MCF 10A (cell line): ENCODE measurements at regions of chr2 and their contacts with region 1.

Region 1: GRCh38 chr2:118046634-118047210 is 32.9 kb upstream of the CCDC93 start:
- DNase-seq: peak; percentile 44
- H3K4me3 Mint-ChIP-seq: no peak overlapping the region
- H3K27ac Mint-ChIP-seq: no peak overlapping the region
- H3K4me1 Mint-ChIP-seq: peaks cover 5% of the 10 kb centered on the region
- H3K27me3 Mint-ChIP-seq: peaks cover 32% of the 10 kb centered on the region
- CTCF ChIP-seq: peak; percentile 54

Region 2: GRCh38 chr2:118032169-118033013 is 14.3 kb before region 1 on chr2:
- CTCF ChIA-PET with region 1: interaction called, 27 read pairs
- POLR2A ChIA-PET with region 1: interaction called, 4 read pairs
- intact Hi-C with region 1: no loop called
- DNase-seq: peak; percentile 60
- H3K4me3 Mint-ChIP-seq: no peak overlapping the region
- H3K27ac Mint-ChIP-seq: no peak overlapping the region
- H3K4me1 Mint-ChIP-seq: no peaks in the 10 kb centered on the region
- H3K27me3 Mint-ChIP-seq: peaks cover 70% of the 10 kb centered on the region
- CTCF ChIP-seq: peak; percentile 46

Region 3: DNA sequence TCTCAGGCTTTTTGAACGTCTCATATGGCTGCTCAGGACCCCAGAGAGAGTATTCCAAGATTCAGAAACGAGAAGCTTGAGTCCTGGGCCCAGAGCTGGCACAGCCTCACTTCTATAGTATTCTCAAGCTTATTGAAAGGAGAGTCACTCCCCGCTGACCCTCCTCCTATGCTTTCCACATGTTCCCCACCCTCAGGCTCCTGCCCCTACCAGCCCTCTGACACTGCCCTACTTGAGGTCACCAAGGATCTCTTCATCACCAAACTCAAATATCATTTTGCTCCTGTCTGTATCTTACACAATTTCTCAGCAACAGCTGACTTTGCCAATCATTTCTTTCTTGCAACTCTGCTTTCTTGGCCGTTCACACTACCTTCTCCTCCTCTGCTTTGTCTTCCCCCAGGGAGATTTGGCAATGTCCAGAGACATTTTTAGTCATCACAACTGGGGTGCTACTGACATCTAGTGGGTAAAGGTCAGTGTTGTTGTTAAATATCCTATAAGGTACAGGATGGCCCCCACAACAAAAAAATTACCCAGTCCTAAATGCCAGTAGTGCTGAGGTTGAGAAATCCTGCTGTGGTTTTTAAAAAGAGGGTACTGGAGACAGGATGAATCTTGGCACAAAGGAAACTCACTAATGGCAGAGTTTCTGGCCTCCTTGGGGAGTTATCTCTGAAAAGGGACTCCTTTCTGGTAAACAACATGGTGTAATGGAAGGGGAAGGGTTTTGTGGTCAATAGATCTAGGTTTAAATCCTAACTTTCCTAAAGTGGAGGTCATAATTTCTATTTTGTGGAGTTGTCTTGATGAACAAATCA is 14.6 kb after region 1 on chr2:
- CTCF ChIA-PET with region 1: interaction called, 164 read pairs
- POLR2A ChIA-PET with region 1: interaction called, 8 read pairs
- intact Hi-C with region 1: loop called (anchors 1 kb)
- DNase-seq: peak; percentile 87
- H3K4me3 Mint-ChIP-seq: no peak overlapping the region
- H3K27ac Mint-ChIP-seq: no peak overlapping the region
- H3K4me1 Mint-ChIP-seq: peaks cover 6% of the 10 kb centered on the region
- H3K27me3 Mint-ChIP-seq: no peaks in the 10 kb centered on the region
- CTCF ChIP-seq: peak; percentile 33

Region 4: DNA sequence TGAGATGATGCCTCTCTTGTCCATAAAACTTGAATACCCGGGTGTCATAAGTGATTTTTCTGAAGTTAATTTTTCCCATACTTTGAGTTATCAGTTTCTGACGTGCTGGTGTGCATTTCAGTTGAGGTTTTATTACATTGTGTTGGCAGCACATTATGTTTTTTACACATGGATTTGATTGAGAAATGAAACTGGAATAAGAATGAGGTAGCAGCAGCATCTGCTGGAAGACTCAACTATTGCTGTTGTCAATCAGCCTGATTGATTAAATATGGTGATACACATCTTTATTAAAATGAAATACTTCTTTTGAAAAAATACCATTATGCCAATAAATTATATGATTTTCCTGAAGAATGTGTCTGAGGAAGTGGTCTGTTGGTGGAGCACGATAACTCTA is 102.1 kb after region 1 on chr2:
- CTCF ChIA-PET with region 1: interaction called, 6 read pairs
- POLR2A ChIA-PET with region 1: interaction called, 3 read pairs
- intact Hi-C with region 1: loop called (anchors 1 kb)
- DNase-seq: peak; percentile 11
- H3K4me3 Mint-ChIP-seq: no peak overlapping the region
- H3K27ac Mint-ChIP-seq: no peak overlapping the region
- H3K4me1 Mint-ChIP-seq: no peaks in the 10 kb centered on the region
- H3K27me3 Mint-ChIP-seq: no peaks in the 10 kb centered on the region
- CTCF ChIP-seq: peak; percentile 11

Region 5: GRCh38 chr2:118202707-118203303 is 156.1 kb after region 1 on chr2:
- CTCF ChIA-PET with region 1: interaction called, 10 read pairs
- POLR2A ChIA-PET with region 1: no interaction called
- intact Hi-C with region 1: loop called (anchors 1 kb)
- DNase-seq: peak; percentile 56
- H3K4me3 Mint-ChIP-seq: no peak overlapping the region
- H3K27ac Mint-ChIP-seq: no peak overlapping the region
- H3K4me1 Mint-ChIP-seq: peaks cover 6% of the 10 kb centered on the region
- H3K27me3 Mint-ChIP-seq: peaks cover 20% of the 10 kb centered on the region
- CTCF ChIP-seq: peak; percentile 75

Region 6: GRCh38 chr2:118221666-118222594 is 175.2 kb after region 1 on chr2:
- CTCF ChIA-PET with region 1: interaction called, 12 read pairs
- POLR2A ChIA-PET with region 1: interaction called, 3 read pairs
- intact Hi-C with region 1: loop called (anchors 5 kb)
- DNase-seq: peak; percentile 72
- H3K4me3 Mint-ChIP-seq: no peak overlapping the region
- H3K27ac Mint-ChIP-seq: no peak overlapping the region
- H3K4me1 Mint-ChIP-seq: peaks cover 12% of the 10 kb centered on the region
- H3K27me3 Mint-ChIP-seq: peaks cover 3% of the 10 kb centered on the region
- CTCF ChIP-seq: peak; percentile 73

Region 7: GRCh38 chr2:118477111-118477862 is 430.6 kb after region 1 on chr2:
- CTCF ChIA-PET with region 1: no interaction called
- POLR2A ChIA-PET with region 1: no interaction called
- intact Hi-C with region 1: no loop called
- DNase-seq: no peak
- H3K4me3 Mint-ChIP-seq: no peak overlapping the region
- H3K27ac Mint-ChIP-seq: no peak overlapping the region
- H3K4me1 Mint-ChIP-seq: no peaks in the 10 kb centered on the region
- H3K27me3 Mint-ChIP-seq: no peaks in the 10 kb centered on the region
- CTCF ChIP-seq: no peak

Region 8: DNA sequence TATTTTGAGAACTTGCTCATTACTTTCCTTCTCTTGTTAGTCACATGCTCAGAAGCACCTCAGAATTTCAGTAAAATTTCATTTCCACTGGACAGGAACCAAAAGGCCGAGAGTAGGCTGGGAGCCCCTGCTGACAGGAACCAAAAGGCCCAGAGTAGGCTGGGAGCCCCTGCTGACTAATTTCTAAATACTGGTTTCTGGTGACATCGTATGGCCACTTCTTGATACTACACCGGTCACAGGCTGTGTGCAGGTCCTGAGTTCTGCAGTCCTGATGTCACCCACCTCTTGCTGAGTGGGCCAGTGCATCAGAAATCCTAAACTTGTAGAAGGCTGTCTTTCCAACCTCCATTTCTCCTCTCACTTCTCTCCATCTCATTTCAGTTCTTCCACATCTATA is 818.4 kb after region 1 on chr2:
- CTCF ChIA-PET with region 1: interaction called, 24 read pairs
- POLR2A ChIA-PET with region 1: no interaction called
- intact Hi-C with region 1: loop called (anchors 5 kb)
- DNase-seq: peak; percentile 65
- H3K4me3 Mint-ChIP-seq: no peak overlapping the region
- H3K27ac Mint-ChIP-seq: no peak overlapping the region
- H3K4me1 Mint-ChIP-seq: peaks cover 14% of the 10 kb centered on the region
- H3K27me3 Mint-ChIP-seq: no peaks in the 10 kb centered on the region
- CTCF ChIP-seq: peak; percentile 80